AG04449 (cell line): ENCODE measurements at regions of chr1 and their contacts with region 1.

Region 1: GRCh38 chr1:76154206-76154956 is 79.8 kb downstream of the ST6GALNAC3 start:
- DNase-seq: peak; percentile 5
- H3K4me3 ChIP-seq: peak overlapping the region; percentile 53
- CTCF ChIP-seq: peak; percentile 95

Region 2: DNA sequence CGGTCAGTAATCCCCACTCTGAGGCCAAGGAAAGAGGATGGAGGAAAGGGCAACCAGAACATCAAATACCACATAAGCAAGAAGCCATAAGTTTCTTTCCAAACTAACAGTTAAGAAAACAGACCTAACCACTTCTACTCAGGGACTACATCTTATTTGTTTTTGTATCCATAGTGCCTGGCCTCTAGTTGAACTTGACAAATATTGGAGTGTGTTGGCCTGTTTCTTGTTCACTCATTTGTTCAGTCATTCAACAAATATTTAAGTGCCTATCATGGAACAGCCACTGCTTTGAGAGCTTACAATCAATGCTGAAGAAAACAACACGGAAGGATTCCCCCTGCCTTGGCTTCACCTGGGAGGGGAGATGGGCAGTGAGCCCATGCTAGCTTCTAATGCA is 10.1 kb before region 1 on chr1:
- CTCF ChIA-PET with region 1: interaction called, 12 read pairs
- POLR2A ChIA-PET with region 1: no interaction called
- DNase-seq: no peak
- H3K4me3 ChIP-seq: no peak overlapping the region
- CTCF ChIP-seq: no peak

Region 3: GRCh38 chr1:76170513-76170912 is 16.1 kb after region 1 on chr1:
- CTCF ChIA-PET with region 1: interaction called, 12 read pairs
- POLR2A ChIA-PET with region 1: no interaction called
- DNase-seq: no peak
- H3K4me3 ChIP-seq: no peak overlapping the region
- CTCF ChIP-seq: no peak

Region 4: GRCh38 chr1:77126307-77126706 is 971.9 kb after region 1 on chr1:
- CTCF ChIA-PET with region 1: interaction called, 32 read pairs
- POLR2A ChIA-PET with region 1: no interaction called
- DNase-seq: peak; percentile 34
- H3K4me3 ChIP-seq: no peak overlapping the region
- CTCF ChIP-seq: peak; percentile 63

Region 5: GRCh38 chr1:77143529-77144121 is 989.2 kb after region 1 on chr1:
- CTCF ChIA-PET with region 1: interaction called, 107 read pairs
- POLR2A ChIA-PET with region 1: no interaction called
- DNase-seq: no peak
- H3K4me3 ChIP-seq: no peak overlapping the region
- CTCF ChIP-seq: no peak